ENCODE measurements at regions of chr17 and their contacts with region 1.

Region 1: DNA sequence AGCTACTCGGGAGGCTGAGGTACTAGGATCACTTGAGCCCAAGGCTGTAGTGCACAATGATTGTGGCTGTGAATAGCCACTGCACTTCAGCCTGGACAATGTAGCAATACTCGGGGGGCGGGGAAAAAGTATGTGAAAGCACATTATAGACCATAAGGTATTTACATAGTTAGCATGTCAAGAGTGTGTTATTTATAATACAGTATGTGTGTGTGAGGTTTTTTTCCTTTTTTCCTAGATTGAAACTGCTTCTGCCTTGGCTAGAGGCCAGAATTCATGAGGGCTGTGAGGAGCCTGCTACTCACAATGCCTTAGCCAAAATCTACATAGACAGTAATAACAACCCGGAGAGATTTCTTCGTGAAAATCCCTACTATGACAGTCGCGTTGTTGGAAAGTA is 30.5 kb downstream of the PTRH2 start:
- DNase-seq: peak; percentile 18
- ATAC-seq: peak; percentile 29
- H3K4me3 ChIP-seq: no peak overlapping the region
- H3K27ac ChIP-seq: no peak overlapping the region
- H3K4me1 ChIP-seq: peaks cover 7% of the 10 kb centered on the region
- H3K27me3 ChIP-seq: no peaks in the 10 kb centered on the region
- CTCF ChIP-seq: no peak
- POLR2A ChIP-seq: no peak
- RAD21 ChIP-seq: no peak

Region 2: GRCh38 chr17:59534598-59534997 is 142.1 kb before region 1 on chr17:
- CTCF ChIA-PET with region 1: no interaction called
- POLR2A ChIA-PET with region 1: no interaction called
- dilution Hi-C with region 1: no loop called
- in situ Hi-C with region 1: no loop called
- intact Hi-C with region 1: no loop called
- DNase-seq: no peak
- ATAC-seq: no peak
- H3K4me3 ChIP-seq: no peak overlapping the region
- H3K27ac ChIP-seq: no peak overlapping the region
- H3K4me1 ChIP-seq: no peaks in the 10 kb centered on the region
- H3K27me3 ChIP-seq: peaks cover 7% of the 10 kb centered on the region
- CTCF ChIP-seq: no peak
- POLR2A ChIP-seq: no peak
- RAD21 ChIP-seq: no peak

Region 3: DNA sequence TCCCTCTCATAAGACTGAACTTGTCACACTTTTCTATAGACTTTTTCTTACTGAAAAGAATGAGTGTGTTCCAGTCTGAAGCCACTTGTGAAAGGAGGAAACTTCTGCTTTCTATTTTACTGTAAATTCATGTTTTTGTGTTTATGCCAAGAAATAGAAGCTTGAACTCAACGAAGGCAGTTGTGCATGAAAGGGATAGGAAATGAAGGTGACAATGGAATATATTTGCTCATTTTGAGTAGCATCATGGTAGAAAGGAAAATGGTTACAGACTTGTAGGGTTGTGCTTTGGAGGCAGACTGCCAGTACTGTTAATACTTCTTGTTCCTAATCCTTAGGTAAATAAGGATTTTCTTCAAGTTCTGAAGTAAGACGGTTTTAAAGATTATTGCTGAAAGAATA is 48.9 kb before region 1 on chr17:
- CTCF ChIA-PET with region 1: no interaction called
- POLR2A ChIA-PET with region 1: no interaction called
- dilution Hi-C with region 1: no loop called
- in situ Hi-C with region 1: loop called (anchors 5 kb)
- intact Hi-C with region 1: no loop called
- DNase-seq: no peak
- ATAC-seq: peak; percentile 5; the same call in 1 of the 2 replicates
- H3K4me3 ChIP-seq: no peak overlapping the region
- H3K27ac ChIP-seq: no peak overlapping the region
- H3K4me1 ChIP-seq: peaks cover 19% of the 10 kb centered on the region
- H3K27me3 ChIP-seq: no peaks in the 10 kb centered on the region
- CTCF ChIP-seq: no peak
- POLR2A ChIP-seq: no peak
- RAD21 ChIP-seq: no peak

Region 4: DNA sequence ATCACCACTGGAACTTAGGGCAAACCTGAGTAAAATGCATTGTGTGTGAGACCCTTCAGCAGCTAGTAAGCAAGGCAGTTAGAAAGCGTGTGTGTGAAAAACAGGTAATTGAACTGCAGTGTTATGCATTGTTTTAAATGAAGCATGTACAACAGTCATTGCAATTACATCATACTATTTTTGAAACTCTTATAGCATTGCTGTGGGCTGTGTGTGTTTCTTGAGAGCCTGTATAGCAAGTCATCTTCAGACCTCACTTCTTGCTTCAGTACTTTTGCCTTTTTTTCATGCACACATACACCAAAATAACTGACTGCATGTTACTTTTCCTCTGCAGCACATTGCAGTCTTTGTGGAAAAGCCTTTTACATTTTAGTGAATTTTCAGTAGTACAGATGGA is 11.3 kb after region 1 on chr17:
- CTCF ChIA-PET with region 1: interaction called, 3 read pairs
- POLR2A ChIA-PET with region 1: no interaction called
- dilution Hi-C with region 1: no loop called
- in situ Hi-C with region 1: no loop called
- intact Hi-C with region 1: loop called (anchors 1 kb)
- DNase-seq: peak; percentile 31
- ATAC-seq: peak; percentile 48; the same call in 1 of the 2 replicates
- H3K4me3 ChIP-seq: no peak overlapping the region
- H3K27ac ChIP-seq: no peak overlapping the region
- H3K4me1 ChIP-seq: no peaks in the 10 kb centered on the region; the same call in 1 of the 2 replicates
- H3K27me3 ChIP-seq: no peaks in the 10 kb centered on the region
- CTCF ChIP-seq: no peak
- POLR2A ChIP-seq: no peak
- RAD21 ChIP-seq: no peak

Region 5: GRCh38 chr17:59707114-59707970 is 30.6 kb after region 1 on chr17 and contains the starts of genes PTRH2 and VMP1:
- CTCF ChIA-PET with region 1: no interaction called
- POLR2A ChIA-PET with region 1: no interaction called
- dilution Hi-C with region 1: no loop called
- in situ Hi-C with region 1: no loop called
- intact Hi-C with region 1: no loop called
- DNase-seq: peak; percentile 100
- ATAC-seq: peak; percentile 97
- H3K4me3 ChIP-seq: peak within 1 kb of the TSS; percentile 68
- H3K27ac ChIP-seq: peak within 1 kb of the TSS; percentile 81
- H3K4me1 ChIP-seq: no peaks in the 10 kb centered on the region
- H3K27me3 ChIP-seq: no peaks in the 10 kb centered on the region
- CTCF ChIP-seq: no peak
- POLR2A ChIP-seq: peak; percentile 96
- RAD21 ChIP-seq: no peak
- total RNA-seq, gene PTRH2: 24.9 and 41.7 TPM in 2 replicates
- total RNA-seq, gene VMP1: 197 and 272 TPM in 2 replicates

Region 6: GRCh38 chr17:60049936-60050335 is 373.2 kb after region 1 on chr17:
- CTCF ChIA-PET with region 1: no interaction called
- POLR2A ChIA-PET with region 1: no interaction called
- dilution Hi-C with region 1: no loop called
- in situ Hi-C with region 1: loop called (anchors 10 kb)
- intact Hi-C with region 1: no loop called
- DNase-seq: peak; percentile 16
- ATAC-seq: no peak; the same call in 1 of the 2 replicates
- H3K4me3 ChIP-seq: no peak overlapping the region
- H3K27ac ChIP-seq: no peak overlapping the region
- H3K4me1 ChIP-seq: no peaks in the 10 kb centered on the region
- H3K27me3 ChIP-seq: no peaks in the 10 kb centered on the region
- CTCF ChIP-seq: no peak
- POLR2A ChIP-seq: no peak
- RAD21 ChIP-seq: no peak

Measured in IMR-90 (cell line).